ENCODE measurements at regions of chr16 and their contacts with region 1.

Region 1: DNA sequence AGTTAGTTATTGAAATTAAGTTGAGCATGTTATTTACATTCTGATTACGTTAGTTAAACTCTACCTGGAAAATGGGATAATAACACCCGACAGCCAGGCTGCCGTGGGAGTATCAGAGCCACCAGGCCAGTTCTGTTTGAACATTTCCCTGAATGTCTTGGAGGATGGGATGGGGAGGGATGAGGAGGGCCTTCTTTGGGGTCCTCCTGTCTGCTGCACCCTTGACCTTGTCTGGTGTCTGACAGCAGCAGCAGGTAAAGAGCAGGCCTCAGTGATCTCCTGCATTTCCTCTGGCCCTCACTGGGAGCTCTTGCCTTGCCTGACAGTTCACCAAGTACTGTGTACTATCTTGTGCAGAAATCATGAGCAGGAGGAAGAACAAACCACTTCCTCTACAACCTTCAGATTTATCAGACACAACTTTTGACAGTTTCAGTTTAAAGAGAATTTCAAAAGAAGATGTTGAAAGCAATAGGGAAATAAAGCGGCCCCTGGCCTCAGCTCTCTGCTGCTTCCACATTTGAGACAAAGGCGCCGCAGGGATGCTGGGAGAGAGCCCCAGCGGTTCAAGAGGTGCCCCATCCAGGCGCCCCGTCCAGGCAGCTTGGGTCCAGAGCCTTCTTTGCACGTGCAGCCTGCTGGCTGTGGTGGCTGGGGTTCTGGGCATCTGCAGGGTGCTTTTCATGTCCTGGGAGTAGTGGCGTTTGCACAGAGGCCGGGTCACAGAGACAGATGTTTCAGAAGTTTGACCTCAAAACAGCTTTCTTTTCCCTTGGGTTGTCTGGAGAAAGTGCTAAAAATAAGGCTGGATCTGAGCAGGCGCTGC is 25.3 kb downstream of the CMIP start:
- DNase-seq: peak; percentile 56 to 76 (median 70)
- H3K4me3 ChIP-seq: peak overlapping the region in 1 of 2 donors; percentile 48
- H3K4me3 Mint-ChIP-seq: peak overlapping the region; percentile 76 to 88 (median 80)
- H3K27ac ChIP-seq: peak overlapping the region; percentile 48
- H3K27ac Mint-ChIP-seq: peak overlapping the region; percentile 88 to 97 (median 94)
- H3K4me1 ChIP-seq: peaks cover 81% of the 10 kb centered on the region
- H3K4me1 Mint-ChIP-seq: peaks cover 47 to 80% (median 67%) of the 10 kb centered on the region in 4 donors
- H3K27me3 ChIP-seq: no peaks in the 10 kb centered on the region
- H3K27me3 Mint-ChIP-seq: no peaks in the 10 kb centered on the region

Region 2: DNA sequence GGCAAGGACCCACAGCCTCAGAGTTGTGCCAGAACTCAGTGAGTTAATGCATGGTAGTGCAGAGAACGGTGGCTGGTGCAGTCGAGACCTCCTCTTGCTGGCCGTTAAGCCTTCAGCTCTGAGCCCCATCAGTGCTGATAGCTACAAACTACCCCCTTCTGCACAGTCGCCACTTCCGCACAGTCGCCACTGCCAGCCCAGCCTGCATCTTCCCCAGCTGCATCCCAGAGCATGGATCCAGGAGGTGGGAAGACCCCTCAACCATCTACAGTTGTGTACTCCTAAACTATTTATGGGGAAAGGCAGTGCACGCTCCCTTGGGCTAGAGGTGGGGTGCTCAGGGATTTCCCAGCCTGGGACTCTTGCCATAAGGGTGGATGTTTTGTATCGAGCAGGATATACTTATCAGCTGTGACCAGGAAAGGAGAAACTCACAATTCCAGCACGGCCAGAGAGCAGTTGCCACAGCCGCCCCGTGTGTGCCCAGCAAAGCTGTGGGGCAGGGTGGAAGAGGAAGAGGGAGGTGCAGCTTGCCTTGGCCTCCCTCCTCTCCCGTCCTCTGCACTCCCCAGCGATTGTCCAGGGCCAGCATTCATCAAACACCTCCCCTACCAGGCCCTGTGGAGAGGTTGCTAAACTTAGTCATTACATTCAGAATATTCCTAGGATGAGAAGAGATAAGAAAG is 74.8 kb before region 1 on chr16:
- CTCF ChIA-PET with region 1: no interaction called
- POLR2A ChIA-PET with region 1: no interaction called
- intact Hi-C with region 1: no loop called
- DNase-seq: no peak
- H3K4me3 ChIP-seq: no peak overlapping the region
- H3K4me3 Mint-ChIP-seq: no peak overlapping the region
- H3K27ac ChIP-seq: no peak overlapping the region
- H3K27ac Mint-ChIP-seq: no peak overlapping the region
- H3K4me1 ChIP-seq: no peaks in the 10 kb centered on the region
- H3K4me1 Mint-ChIP-seq: no peaks in the 10 kb centered on the region
- H3K27me3 ChIP-seq: no peaks in the 10 kb centered on the region
- H3K27me3 Mint-ChIP-seq: no peaks in the 10 kb centered on the region

Region 3: GRCh38 chr16:81451753-81452680 is 17.9 kb before region 1 on chr16:
- CTCF ChIA-PET with region 1: interaction called, 3 read pairs
- POLR2A ChIA-PET with region 1: interaction called, 42 read pairs
- intact Hi-C with region 1: loop called (anchors 2 kb)
- DNase-seq: peak; percentile 24 to 52 (median 49)
- H3K4me3 ChIP-seq: no peak overlapping the region
- H3K4me3 Mint-ChIP-seq: peak overlapping the region; percentile 45 to 85 (median 66)
- H3K27ac ChIP-seq: no peak overlapping the region
- H3K27ac Mint-ChIP-seq: peak overlapping the region; percentile 69 to 96 (median 86)
- H3K4me1 ChIP-seq: peaks cover 63% of the 10 kb centered on the region
- H3K4me1 Mint-ChIP-seq: peaks cover 48 to 85% (median 66%) of the 10 kb centered on the region in 4 donors
- H3K27me3 ChIP-seq: no peaks in the 10 kb centered on the region
- H3K27me3 Mint-ChIP-seq: no peaks in the 10 kb centered on the region